ENCODE measurements at regions of chr3 and their contacts with region 1.

Region 1: GRCh38 chr3:183555541-183556081 is at the start of gene KLHL6:
- DNase-seq: peak; percentile 90
- H3K4me3 Mint-ChIP-seq: peak within 1 kb of the TSS; percentile 100
- H3K27ac Mint-ChIP-seq: peak within 1 kb of the TSS; percentile 99
- H3K4me1 Mint-ChIP-seq: peaks cover 52% of the 10 kb centered on the region
- H3K27me3 Mint-ChIP-seq: no peaks in the 10 kb centered on the region
- total RNA-seq, gene KLHL6: 63.5 to 65.2 TPM

Region 2: DNA sequence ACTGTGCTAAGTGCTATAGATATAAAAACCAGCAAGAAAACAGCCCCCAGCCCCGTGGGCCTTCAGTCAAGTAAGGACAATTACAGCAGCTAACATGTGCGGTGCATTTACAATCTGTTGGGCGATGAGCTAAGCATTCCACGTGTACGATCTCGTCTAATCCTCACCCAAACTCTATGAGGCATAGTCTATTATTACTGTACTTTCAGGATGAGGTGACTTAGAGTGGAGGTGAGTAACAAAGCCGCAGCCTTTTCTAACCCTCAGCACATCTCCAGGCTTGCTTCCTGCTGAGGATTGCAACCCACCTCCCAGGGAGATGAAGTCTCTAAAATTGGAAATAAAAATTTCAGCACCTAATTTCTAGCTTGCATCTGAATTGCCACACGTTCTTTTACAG is 74.0 kb before region 1 on chr3:
- CTCF ChIA-PET with region 1: interaction called, 4 read pairs
- POLR2A ChIA-PET with region 1: no interaction called
- intact Hi-C with region 1: loop called (anchors 1 kb)
- DNase-seq: peak; percentile 49
- H3K4me3 Mint-ChIP-seq: no peak overlapping the region
- H3K27ac Mint-ChIP-seq: no peak overlapping the region
- H3K4me1 Mint-ChIP-seq: peaks cover 6% of the 10 kb centered on the region
- H3K27me3 Mint-ChIP-seq: no peaks in the 10 kb centered on the region

Region 3: GRCh38 chr3:183527428-183528379 is 27.9 kb before region 1 on chr3:
- CTCF ChIA-PET with region 1: interaction called, 8 read pairs
- POLR2A ChIA-PET with region 1: interaction called, 4 read pairs
- intact Hi-C with region 1: loop called (anchors 1 kb)
- DNase-seq: peak; percentile 31
- H3K4me3 Mint-ChIP-seq: no peak overlapping the region
- H3K27ac Mint-ChIP-seq: peak overlapping the region; percentile 82
- H3K4me1 Mint-ChIP-seq: peaks cover 66% of the 10 kb centered on the region
- H3K27me3 Mint-ChIP-seq: no peaks in the 10 kb centered on the region

Region 4: DNA sequence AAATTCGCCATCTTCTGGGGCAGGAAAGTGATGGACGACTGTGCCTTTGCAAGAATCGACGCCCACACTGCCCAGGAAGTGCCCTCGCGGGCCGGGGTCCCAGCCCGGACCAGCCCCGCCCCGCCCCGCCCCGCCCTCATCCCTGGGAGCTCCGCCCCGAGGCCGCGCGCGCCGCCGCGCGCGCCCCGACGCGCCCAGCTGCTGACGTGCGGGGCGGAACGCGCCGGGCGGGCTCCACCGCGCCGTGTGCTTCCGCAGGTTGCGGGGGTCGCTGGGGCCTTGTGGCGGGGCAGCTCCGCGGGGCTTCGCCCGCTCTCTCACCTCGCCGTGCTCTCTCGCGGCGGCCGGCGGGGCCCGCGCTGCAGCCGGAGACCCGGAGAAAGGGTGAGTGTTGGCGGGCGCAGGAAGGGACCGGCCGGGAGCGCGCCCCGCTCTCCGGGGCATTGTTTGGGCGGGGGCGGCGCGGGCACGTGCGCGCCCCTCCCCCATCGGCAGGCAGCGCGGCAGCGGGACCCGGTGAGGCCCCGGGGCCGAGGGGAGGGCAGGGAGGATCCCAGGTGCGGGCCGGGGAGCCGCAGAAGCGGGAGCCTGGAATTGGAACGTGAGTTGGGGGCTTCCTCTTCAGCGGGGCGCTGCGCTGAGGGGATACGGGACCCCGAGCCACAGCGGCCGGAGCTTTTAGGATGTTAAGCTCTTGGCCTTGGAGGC is 142.2 kb after region 1 on chr3 and contains the start of gene YEATS2:
- CTCF ChIA-PET with region 1: no interaction called
- POLR2A ChIA-PET with region 1: interaction called, 7 read pairs
- intact Hi-C with region 1: loop called (anchors 2 kb)
- DNase-seq: peak; percentile 88
- H3K4me3 Mint-ChIP-seq: peak within 1 kb of the TSS; percentile 82
- H3K27ac Mint-ChIP-seq: peak within 1 kb of the TSS; percentile 86
- H3K4me1 Mint-ChIP-seq: peaks cover 32% of the 10 kb centered on the region
- H3K27me3 Mint-ChIP-seq: no peaks in the 10 kb centered on the region
- total RNA-seq, gene YEATS2: 45.4 to 48.8 TPM

Region 5: DNA sequence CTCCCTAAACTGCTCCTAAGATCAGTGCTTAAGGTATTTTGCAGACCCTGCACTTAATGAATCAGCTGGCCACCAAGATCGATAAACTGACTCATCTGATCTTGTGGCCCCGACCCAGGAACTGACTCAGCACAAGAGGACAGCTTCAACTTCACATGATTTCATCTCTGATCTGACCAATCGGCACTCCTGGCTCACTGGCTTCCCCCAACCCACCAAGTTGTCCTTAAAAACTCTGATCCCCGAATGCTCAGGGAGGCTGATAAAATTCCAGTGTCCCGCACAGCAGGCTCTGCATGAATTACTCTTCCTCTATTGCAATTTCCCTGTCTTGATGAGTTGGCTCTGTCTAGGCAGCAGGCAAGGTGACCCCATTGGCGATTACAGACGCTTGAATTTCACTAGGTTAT is 554.7 kb after region 1 on chr3:
- CTCF ChIA-PET with region 1: no interaction called
- POLR2A ChIA-PET with region 1: no interaction called
- intact Hi-C with region 1: no loop called
- DNase-seq: no peak
- H3K4me3 Mint-ChIP-seq: no peak overlapping the region
- H3K27ac Mint-ChIP-seq: no peak overlapping the region
- H3K4me1 Mint-ChIP-seq: no peaks in the 10 kb centered on the region
- H3K27me3 Mint-ChIP-seq: peaks cover 4% of the 10 kb centered on the region

Region 6: DNA sequence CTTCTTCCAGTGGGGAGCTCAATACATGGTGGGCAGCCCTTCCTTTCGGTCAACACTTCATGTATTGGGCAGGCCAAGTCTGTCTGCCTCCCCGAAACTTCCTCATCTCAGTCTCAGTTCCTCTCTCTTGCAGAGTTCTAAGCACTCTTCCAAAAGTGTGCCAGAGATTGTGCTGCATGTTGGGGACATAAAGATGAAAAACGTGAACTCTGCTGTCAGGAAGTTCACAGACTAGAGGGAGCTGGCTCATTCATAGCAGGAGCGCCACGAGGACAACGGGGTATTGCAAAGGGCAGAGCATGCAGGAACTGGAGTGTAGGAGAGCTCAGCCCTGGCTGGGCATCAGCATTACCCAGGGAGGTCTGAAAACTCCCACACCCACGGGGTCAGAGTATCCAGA is 990.6 kb after region 1 on chr3:
- CTCF ChIA-PET with region 1: no interaction called
- POLR2A ChIA-PET with region 1: no interaction called
- intact Hi-C with region 1: no loop called
- DNase-seq: no peak
- H3K4me3 Mint-ChIP-seq: no peak overlapping the region
- H3K27ac Mint-ChIP-seq: no peak overlapping the region
- H3K4me1 Mint-ChIP-seq: peaks cover 7% of the 10 kb centered on the region
- H3K27me3 Mint-ChIP-seq: peaks cover 4% of the 10 kb centered on the region

Measured in activated CD4-positive, alpha-beta memory T cell treated with anti-CD3 and anti-CD28 coated beads for 36 hours (primary cell).